Activated B cell treated with CpG ODN at 0.5 μM for 24 hours (primary cell): ENCODE measurements at regions of chr17 and their contacts with region 1.

Region 1: DNA sequence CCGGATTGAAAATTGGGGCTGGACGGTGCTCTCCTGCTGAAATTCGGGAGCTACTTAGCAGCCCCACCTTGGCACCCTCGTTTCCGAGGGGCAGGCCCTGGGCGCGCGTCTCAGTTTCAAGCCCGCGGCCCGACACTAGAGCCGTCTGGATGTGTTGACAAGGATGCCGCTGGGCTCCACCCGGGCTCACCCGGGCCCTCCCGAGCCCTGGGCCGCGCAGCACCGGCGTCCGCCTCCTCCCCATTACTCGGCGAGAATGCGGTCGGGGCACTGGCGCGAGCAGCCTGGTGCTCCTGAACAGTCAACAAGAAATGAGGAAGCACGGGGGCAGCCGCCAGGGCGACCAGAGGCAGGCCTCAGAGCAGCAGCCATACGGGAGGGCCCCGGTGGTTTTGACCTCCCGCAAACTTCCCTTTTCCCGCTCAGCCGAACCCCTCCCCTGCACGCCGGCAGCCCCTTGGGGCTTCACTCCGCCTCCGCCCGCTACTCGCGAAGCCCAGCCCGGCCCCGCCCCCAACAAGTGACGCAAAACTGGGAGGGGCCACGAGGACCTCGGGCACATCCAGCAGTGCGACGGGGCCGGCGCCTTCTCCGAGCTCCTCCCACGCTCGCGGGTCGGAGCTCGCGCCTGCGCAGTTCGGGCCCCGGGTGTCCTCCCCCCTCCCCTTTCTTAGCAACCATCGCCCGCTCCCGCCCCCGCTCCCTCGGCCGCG is 447 bp upstream of the SEC14L1 start:
- DNase-seq: peak; percentile 100
- ATAC-seq: peak; percentile 88
- H3K4me3 Mint-ChIP-seq: peak overlapping the region; percentile 75
- H3K27ac Mint-ChIP-seq: peak overlapping the region; percentile 94
- H3K4me1 Mint-ChIP-seq: peaks cover 55% of the 10 kb centered on the region
- H3K27me3 Mint-ChIP-seq: no peaks in the 10 kb centered on the region
- CTCF ChIP-seq: no peak

Region 2: GRCh38 chr17:75228837-75229236 is 1911.5 kb before region 1 on chr17:
- CTCF ChIA-PET with region 1: no interaction called
- POLR2A ChIA-PET with region 1: no interaction called
- intact Hi-C with region 1: no loop called
- DNase-seq: no peak
- ATAC-seq: no peak
- H3K4me3 Mint-ChIP-seq: no peak overlapping the region
- H3K27ac Mint-ChIP-seq: no peak overlapping the region
- H3K4me1 Mint-ChIP-seq: no peaks in the 10 kb centered on the region
- H3K27me3 Mint-ChIP-seq: no peaks in the 10 kb centered on the region
- CTCF ChIP-seq: no peak

Region 3: GRCh38 chr17:76726231-76726775 is 414.0 kb before region 1 on chr17 and contains the start of gene JMJD6:
- CTCF ChIA-PET with region 1: no interaction called
- POLR2A ChIA-PET with region 1: interaction called, 4 read pairs
- intact Hi-C with region 1: loop called (anchors 1 kb)
- DNase-seq: peak; percentile 83
- ATAC-seq: peak; percentile 75
- H3K4me3 Mint-ChIP-seq: peak within 1 kb of the TSS; percentile 96
- H3K27ac Mint-ChIP-seq: peak within 1 kb of the TSS; percentile 95
- H3K4me1 Mint-ChIP-seq: peaks cover 48% of the 10 kb centered on the region
- H3K27me3 Mint-ChIP-seq: no peaks in the 10 kb centered on the region
- CTCF ChIP-seq: no peak
- total RNA-seq, gene JMJD6: 32.7 and 33.1 TPM in 2 replicates

Region 4: GRCh38 chr17:77088455-77089123 is 51.7 kb before region 1 on chr17:
- CTCF ChIA-PET with region 1: interaction called, 12 read pairs
- POLR2A ChIA-PET with region 1: interaction called, 59 read pairs
- intact Hi-C with region 1: loop called (anchors 1 kb)
- DNase-seq: peak; percentile 84
- ATAC-seq: peak; percentile 89
- H3K4me3 Mint-ChIP-seq: peak overlapping the region; percentile 95
- H3K27ac Mint-ChIP-seq: peak overlapping the region; percentile 95
- H3K4me1 Mint-ChIP-seq: peaks cover 52% of the 10 kb centered on the region
- H3K27me3 Mint-ChIP-seq: peaks cover 3% of the 10 kb centered on the region
- CTCF ChIP-seq: no peak

Region 5: GRCh38 chr17:77127735-77128361 is 12.5 kb before region 1 on chr17:
- CTCF ChIA-PET with region 1: no interaction called
- POLR2A ChIA-PET with region 1: interaction called, 10 read pairs
- intact Hi-C with region 1: no loop called
- DNase-seq: no peak
- ATAC-seq: peak; percentile 79
- H3K4me3 Mint-ChIP-seq: peak overlapping the region; percentile 63
- H3K27ac Mint-ChIP-seq: no peak overlapping the region
- H3K4me1 Mint-ChIP-seq: peaks cover 10% of the 10 kb centered on the region
- H3K27me3 Mint-ChIP-seq: peaks cover 4% of the 10 kb centered on the region
- CTCF ChIP-seq: no peak

Region 6: DNA sequence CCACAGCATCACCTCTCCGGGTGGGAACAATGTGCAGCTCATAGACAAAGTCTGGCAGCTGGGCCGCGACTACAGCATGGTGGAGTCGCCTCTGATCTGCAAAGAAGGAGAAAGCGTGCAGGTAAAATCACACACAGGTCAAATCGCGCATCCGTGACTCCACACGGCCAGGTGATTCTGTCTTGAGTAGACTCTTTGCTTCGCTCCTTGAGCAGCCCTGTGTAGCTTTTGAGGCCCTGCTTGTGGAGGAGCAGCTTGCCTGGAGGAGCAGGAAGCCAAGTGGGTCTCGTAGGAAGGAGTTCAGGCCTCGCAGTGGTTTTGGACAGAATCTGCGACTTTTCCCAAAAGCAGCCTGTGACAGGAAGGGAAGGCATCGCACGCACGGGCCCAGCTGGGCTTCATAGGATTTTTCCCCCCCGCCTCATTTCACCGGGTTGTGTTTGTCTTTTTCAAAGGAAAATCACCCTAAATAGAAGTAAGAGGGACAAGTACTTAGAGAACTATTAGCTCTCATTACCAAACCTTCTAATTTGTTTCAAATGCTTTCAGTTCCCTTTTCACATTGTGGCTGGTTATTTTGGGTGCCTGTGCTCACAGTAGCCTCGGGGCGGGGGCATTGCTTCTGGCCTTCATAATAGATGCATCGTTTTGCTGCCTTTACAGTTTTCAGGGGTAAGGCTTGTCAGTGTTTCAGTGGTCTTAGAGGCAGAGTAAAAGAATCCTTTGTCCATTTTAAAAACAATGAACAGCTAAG is 71.9 kb after region 1 on chr17:
- CTCF ChIA-PET with region 1: no interaction called
- POLR2A ChIA-PET with region 1: interaction called, 35 read pairs
- intact Hi-C with region 1: loop called (anchors 1 kb)
- DNase-seq: peak; percentile 36
- ATAC-seq: peak; percentile 93
- H3K4me3 Mint-ChIP-seq: peak overlapping the region; percentile 70
- H3K27ac Mint-ChIP-seq: peak overlapping the region; percentile 80
- H3K4me1 Mint-ChIP-seq: peaks cover 49% of the 10 kb centered on the region
- H3K27me3 Mint-ChIP-seq: no peaks in the 10 kb centered on the region
- CTCF ChIP-seq: no peak

Region 7: DNA sequence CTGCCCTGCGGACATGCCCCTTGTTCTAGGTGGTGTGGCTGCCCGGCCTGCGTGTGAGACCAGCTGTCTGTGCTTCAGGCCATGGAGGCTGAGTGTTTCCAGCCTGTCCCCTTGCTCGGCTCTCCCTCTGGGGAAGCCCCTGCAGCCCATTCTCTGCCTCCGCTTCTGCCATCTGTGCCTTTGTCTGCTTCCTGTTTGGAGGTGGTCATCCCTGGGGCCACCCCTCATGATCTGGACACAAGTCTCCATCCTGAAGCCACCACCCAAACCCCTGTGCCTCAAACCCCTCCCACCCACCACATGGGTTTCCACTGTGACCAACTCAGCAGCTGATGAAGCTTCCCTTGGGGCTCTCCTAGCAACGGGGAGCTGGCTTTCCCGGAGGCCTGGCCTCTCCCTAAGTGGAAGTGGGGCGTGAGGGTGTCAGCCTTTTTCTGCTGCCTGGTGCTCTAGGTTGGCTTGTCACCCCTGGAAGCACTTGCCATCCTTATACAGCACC is 185.3 kb after region 1 on chr17:
- CTCF ChIA-PET with region 1: no interaction called
- POLR2A ChIA-PET with region 1: interaction called, 8 read pairs
- intact Hi-C with region 1: loop called (anchors 1 kb)
- DNase-seq: no peak
- ATAC-seq: peak; percentile 6
- H3K4me3 Mint-ChIP-seq: peak overlapping the region; percentile 92
- H3K27ac Mint-ChIP-seq: peak overlapping the region; percentile 96
- H3K4me1 Mint-ChIP-seq: peaks cover 88% of the 10 kb centered on the region
- H3K27me3 Mint-ChIP-seq: no peaks in the 10 kb centered on the region
- CTCF ChIP-seq: no peak

Region 8: GRCh38 chr17:78128551-78129350 is 988.4 kb after region 1 on chr17 and contains the start of gene TMC6:
- CTCF ChIA-PET with region 1: no interaction called
- POLR2A ChIA-PET with region 1: interaction called, 13 read pairs
- intact Hi-C with region 1: no loop called
- DNase-seq: peak; percentile 66
- ATAC-seq: peak; percentile 17
- H3K4me3 Mint-ChIP-seq: peak within 1 kb of the TSS; percentile 92
- H3K27ac Mint-ChIP-seq: peak within 1 kb of the TSS; percentile 93
- H3K4me1 Mint-ChIP-seq: peaks cover 74% of the 10 kb centered on the region
- H3K27me3 Mint-ChIP-seq: no peaks in the 10 kb centered on the region
- CTCF ChIP-seq: no peak
- total RNA-seq, gene TMC6: 746 and 896 TPM in 2 replicates